ENCODE measurements at regions of chr16 and their contacts with region 1.

Region 1: DNA sequence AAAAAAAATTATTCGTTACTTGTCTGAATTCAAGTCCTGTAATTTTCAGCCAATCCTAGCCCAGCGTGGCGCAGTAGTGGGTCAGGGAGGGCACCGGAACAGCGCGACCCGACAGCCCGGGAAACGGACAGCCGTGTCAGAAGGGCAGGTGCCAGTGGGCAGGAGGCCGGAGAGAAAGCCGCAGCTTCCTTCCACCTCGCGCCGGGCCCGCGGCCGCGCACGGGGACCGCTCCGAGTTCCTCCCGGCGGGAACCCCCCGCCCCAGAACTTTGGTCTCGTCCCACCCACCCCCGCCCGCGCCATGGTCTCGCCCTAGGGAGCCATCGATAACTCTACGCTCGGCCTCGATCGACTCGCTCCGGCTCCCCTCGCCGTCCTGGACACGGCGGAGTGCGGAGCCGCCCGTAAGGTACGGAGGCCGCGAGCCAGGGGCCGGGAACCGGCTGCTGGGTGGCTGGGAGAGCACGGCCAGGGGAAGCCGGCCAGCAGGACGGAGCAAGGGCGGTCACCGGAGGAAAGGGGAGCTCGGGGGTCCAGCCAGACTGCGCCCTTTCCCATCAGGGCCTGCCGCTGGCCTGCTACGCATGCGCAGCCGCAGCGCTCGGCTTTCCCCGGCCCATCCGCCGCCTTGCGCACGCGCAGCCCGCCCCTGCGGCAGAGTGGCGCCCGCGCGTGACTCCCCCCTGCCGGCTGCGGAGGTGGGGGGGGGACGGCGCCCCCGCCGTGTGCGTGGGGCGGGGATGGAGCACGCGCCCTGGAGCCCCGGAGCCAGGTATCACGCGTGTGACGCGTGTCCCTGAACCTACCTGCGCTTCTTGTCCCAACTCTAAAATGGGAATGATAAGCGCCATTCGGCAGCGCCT is at the start of gene MLST8:
- DNase-seq: peak; percentile 87 to 99 (median 97)
- H3K4me3 ChIP-seq: peak within 1 kb of the TSS; percentile 88 to 89
- H3K4me3 Mint-ChIP-seq: peak within 1 kb of the TSS; percentile 79 to 88 (median 84)
- H3K27ac ChIP-seq: peak within 1 kb of the TSS; percentile 90
- H3K27ac Mint-ChIP-seq: peak within 1 kb of the TSS; percentile 69 to 95 (median 89)
- H3K4me1 ChIP-seq: peaks cover 26% of the 10 kb centered on the region
- H3K4me1 Mint-ChIP-seq: peaks cover 12 to 29% (median 18%) of the 10 kb centered on the region in 4 donors
- H3K27me3 ChIP-seq: no peaks in the 10 kb centered on the region
- H3K27me3 Mint-ChIP-seq: peaks cover 0 to under 1% of the 10 kb centered on the region in 2 donors
- total RNA-seq, gene MLST8: 28.1 to 31.1 TPM

Region 2: GRCh38 chr16:2223375-2224182 is 18.2 kb after region 1 on chr16 and contains the start of gene E4F1:
- CTCF ChIA-PET with region 1: no interaction called
- POLR2A ChIA-PET with region 1: interaction called, 13 read pairs
- intact Hi-C with region 1: loop called (anchors 1 kb)
- DNase-seq: peak; percentile 97 to 99 (median 99)
- H3K4me3 ChIP-seq: peak within 1 kb of the TSS; percentile 81 to 84
- H3K4me3 Mint-ChIP-seq: peak within 1 kb of the TSS; percentile 85 to 93 (median 90)
- H3K27ac ChIP-seq: peak within 1 kb of the TSS; percentile 90
- H3K27ac Mint-ChIP-seq: peak within 1 kb of the TSS; percentile 82 to 94 (median 89)
- H3K4me1 ChIP-seq: peaks cover 14% of the 10 kb centered on the region
- H3K4me1 Mint-ChIP-seq: peaks cover 7 to 27% (median 19%) of the 10 kb centered on the region in 4 donors
- H3K27me3 ChIP-seq: no peaks in the 10 kb centered on the region
- H3K27me3 Mint-ChIP-seq: no peaks in the 10 kb centered on the region
- total RNA-seq, gene E4F1: 46.5 to 49.7 TPM

Measured in CD4-positive, alpha-beta memory T cell (primary cell).